ENCODE measurements at regions of chr18 and their contacts with region 1.

Region 1: GRCh38 chr18:40292985-40293710 is 1661.9 kb upstream of the PIK3C3 start:
- DNase-seq: no peak
- H3K4me3 ChIP-seq: no peak overlapping the region
- H3K27ac ChIP-seq: no peak overlapping the region
- H3K4me1 ChIP-seq: no peaks in the 10 kb centered on the region
- H3K27me3 ChIP-seq: no peaks in the 10 kb centered on the region
- CTCF ChIP-seq: no peak
- POLR2A ChIP-seq: no peak

Region 2: GRCh38 chr18:40186677-40187076 is 106.5 kb before region 1 on chr18:
- intact Hi-C with region 1: no loop called
- DNase-seq: no peak
- H3K4me3 ChIP-seq: no peak overlapping the region
- H3K27ac ChIP-seq: no peak overlapping the region
- H3K4me1 ChIP-seq: no peaks in the 10 kb centered on the region
- H3K27me3 ChIP-seq: no peaks in the 10 kb centered on the region
- CTCF ChIP-seq: no peak
- POLR2A ChIP-seq: no peak

Region 3: GRCh38 chr18:40249390-40250080 is 43.6 kb before region 1 on chr18:
- intact Hi-C with region 1: loop called (anchors 5 kb)
- DNase-seq: no peak
- H3K4me3 ChIP-seq: no peak overlapping the region
- H3K27ac ChIP-seq: no peak overlapping the region
- H3K4me1 ChIP-seq: no peaks in the 10 kb centered on the region
- H3K27me3 ChIP-seq: no peaks in the 10 kb centered on the region
- CTCF ChIP-seq: no peak
- POLR2A ChIP-seq: no peak

Measured in vagina (tissue), 2 donors.